Naive thymus-derived CD4-positive, alpha-beta T cell (primary cell): ENCODE measurements at regions of chr20 and their contacts with region 1.

Region 1: GRCh38 chr20:44885392-44886265 is at the start of gene YWHAB:
- DNase-seq: peak; percentile 89 to 98 (median 95)
- ATAC-seq: peak; percentile 98
- H3K4me3 ChIP-seq: peak within 1 kb of the TSS; percentile 87
- H3K4me3 Mint-ChIP-seq: peak within 1 kb of the TSS; percentile 83 to 98 (median 97)
- H3K27ac ChIP-seq: peak within 1 kb of the TSS; percentile 96
- H3K27ac Mint-ChIP-seq: peak within 1 kb of the TSS; percentile 89 to 99 (median 95)
- H3K4me1 ChIP-seq: peaks cover 39% of the 10 kb centered on the region in 2 donors
- H3K4me1 Mint-ChIP-seq: peaks cover 39 to 79% (median 68%) of the 10 kb centered on the region in 7 donors
- H3K27me3 ChIP-seq: no peaks in the 10 kb centered on the region
- H3K27me3 Mint-ChIP-seq: no peaks in the 10 kb centered on the region
- total RNA-seq, gene YWHAB: 135 to 262 (median 203) TPM

Region 2: DNA sequence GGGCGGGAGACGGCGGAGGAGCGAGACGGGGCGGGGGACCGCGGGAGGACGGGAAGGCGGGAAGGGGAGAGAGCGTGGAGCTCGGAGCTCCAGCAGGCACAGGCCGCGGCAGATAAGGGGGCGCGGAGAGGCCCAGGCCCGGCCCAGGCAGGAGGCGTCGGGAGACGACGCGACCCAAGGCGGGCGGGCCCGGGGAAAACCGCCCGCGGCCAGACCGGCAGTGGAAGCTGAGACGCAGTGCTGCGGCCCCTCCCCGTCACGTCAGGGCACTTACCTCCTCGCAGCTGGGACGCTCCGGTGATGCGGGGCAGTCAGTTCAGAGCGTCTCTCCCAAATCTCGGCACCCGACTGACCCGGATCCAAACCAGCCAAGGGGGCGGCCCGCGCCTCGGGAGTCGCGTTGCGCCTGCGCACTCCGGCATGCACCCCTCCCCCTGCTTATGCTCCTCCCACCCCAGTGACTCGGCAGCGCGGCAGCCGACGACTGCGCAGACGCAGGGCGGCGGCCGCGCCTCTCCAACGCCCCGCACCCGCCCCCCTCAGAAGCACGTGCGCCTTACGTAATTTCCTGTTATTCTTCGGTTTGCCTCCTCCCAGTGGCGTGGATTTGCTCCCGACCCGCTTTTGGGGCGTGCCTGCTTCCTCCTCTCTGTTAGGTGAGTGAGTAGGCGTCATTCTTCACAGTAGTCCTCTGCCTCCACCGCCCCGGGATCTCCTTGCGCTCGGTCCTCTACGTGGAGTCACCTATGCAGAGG is 675.0 kb before region 1 on chr20 and contains the start of gene OSER1:
- CTCF ChIA-PET with region 1: no interaction called
- POLR2A ChIA-PET with region 1: interaction called, 3 read pairs
- intact Hi-C with region 1: loop called (anchors 1 kb)
- DNase-seq: peak; percentile 98 to 99 (median 99)
- ATAC-seq: peak; percentile 91
- H3K4me3 ChIP-seq: peak within 1 kb of the TSS; percentile 96
- H3K4me3 Mint-ChIP-seq: peak within 1 kb of the TSS; percentile 90 to 100 (median 95)
- H3K27ac ChIP-seq: peak within 1 kb of the TSS; percentile 97
- H3K27ac Mint-ChIP-seq: peak within 1 kb of the TSS; percentile 97 to 99 (median 98)
- H3K4me1 ChIP-seq: peaks cover 23 to 29% of the 10 kb centered on the region in 2 donors
- H3K4me1 Mint-ChIP-seq: peaks cover 45 to 78% (median 72%) of the 10 kb centered on the region in 7 donors
- H3K27me3 ChIP-seq: no peaks in the 10 kb centered on the region
- H3K27me3 Mint-ChIP-seq: peaks cover 0 to 4% (median 0%) of the 10 kb centered on the region in 5 donors
- total RNA-seq, gene OSER1: 25.0 to 115 (median 43.0) TPM

Region 3: DNA sequence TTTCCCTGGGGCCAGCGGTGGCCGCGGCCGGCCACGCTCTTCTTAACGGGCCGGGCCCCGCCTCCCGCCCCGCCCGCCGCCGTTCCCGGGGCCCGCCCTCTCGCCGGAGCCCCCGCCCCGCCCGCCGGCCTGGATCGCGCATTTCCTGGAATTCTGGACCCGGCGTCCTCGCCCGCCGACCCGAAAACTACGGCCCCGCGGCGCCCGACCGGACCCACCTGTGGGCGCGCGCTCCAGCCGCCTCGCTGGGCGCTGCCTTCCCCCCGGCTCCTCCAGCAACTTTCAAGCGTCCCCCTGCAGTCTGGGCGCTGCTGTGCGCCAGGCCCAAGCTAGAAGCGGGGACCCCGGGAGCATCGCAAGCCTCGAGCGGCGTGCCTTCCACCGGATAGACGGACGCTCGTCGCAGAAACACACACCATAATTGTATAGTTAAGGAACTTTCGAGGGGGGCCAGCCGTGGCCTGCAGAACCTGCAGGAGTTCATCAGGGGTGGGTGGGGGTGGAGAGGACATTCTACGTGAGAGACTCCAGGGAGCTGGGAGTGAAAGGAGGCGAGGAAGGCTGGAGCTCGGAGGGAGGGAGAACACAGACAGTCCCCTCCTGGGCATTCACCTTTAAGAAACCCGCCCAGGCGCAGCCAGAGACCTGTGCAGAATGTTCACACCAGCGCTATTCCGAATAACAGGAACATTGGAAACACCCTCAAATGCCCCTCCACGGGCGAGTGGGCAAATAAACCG is 233.8 kb before region 1 on chr20 and contains the start of gene ADA:
- CTCF ChIA-PET with region 1: no interaction called
- POLR2A ChIA-PET with region 1: interaction called, 4 read pairs
- intact Hi-C with region 1: loop called in 1 of 2 experiments (anchors 1 kb)
- DNase-seq: peak; percentile 26 to 70 (median 48)
- ATAC-seq: peak; percentile 70
- H3K4me3 ChIP-seq: peak within 1 kb of the TSS; percentile 73
- H3K4me3 Mint-ChIP-seq: peak within 1 kb of the TSS; percentile 81 to 96 (median 94)
- H3K27ac ChIP-seq: peak within 1 kb of the TSS; percentile 73
- H3K27ac Mint-ChIP-seq: peak within 1 kb of the TSS; percentile 88 to 98 (median 95)
- H3K4me1 ChIP-seq: peaks cover 38 to 43% of the 10 kb centered on the region in 2 donors
- H3K4me1 Mint-ChIP-seq: peaks cover 40 to 57% (median 55%) of the 10 kb centered on the region in 7 donors
- H3K27me3 ChIP-seq: no peaks in the 10 kb centered on the region
- H3K27me3 Mint-ChIP-seq: no peaks in the 10 kb centered on the region
- total RNA-seq, gene ADA: 26.1 to 103 (median 28.2) TPM

Region 4: DNA sequence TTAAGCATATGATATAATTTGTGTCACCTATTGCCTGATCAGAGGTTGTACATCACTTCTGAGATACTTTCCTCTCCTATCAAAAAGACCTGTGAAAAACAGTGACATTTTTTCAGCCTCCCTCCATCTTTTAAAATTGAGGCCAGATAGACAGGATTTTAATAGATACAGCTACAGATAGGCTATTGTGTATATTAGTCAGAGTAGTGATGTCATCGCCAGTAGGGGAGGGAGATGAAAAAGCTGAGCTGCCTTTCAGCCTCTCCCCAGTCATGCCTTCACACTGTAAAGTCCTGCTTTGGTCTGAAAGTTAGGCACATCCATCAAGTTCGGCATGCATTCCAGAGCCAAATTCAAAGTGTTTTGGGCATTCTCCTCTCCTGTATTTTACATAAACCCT is 16.3 kb after region 1 on chr20:
- CTCF ChIA-PET with region 1: interaction called, 6 read pairs
- POLR2A ChIA-PET with region 1: interaction called, 10 read pairs
- intact Hi-C with region 1: no loop called
- DNase-seq: no peak
- ATAC-seq: no peak
- H3K4me3 ChIP-seq: no peak overlapping the region
- H3K4me3 Mint-ChIP-seq: no peak overlapping the region
- H3K27ac ChIP-seq: no peak overlapping the region
- H3K27ac Mint-ChIP-seq: peak overlapping the region in 1 of 9 donors; percentile 43
- H3K4me1 ChIP-seq: peaks cover 15 to 18% of the 10 kb centered on the region in 2 donors
- H3K4me1 Mint-ChIP-seq: peaks cover 20 to 48% (median 35%) of the 10 kb centered on the region in 7 donors
- H3K27me3 ChIP-seq: no peaks in the 10 kb centered on the region
- H3K27me3 Mint-ChIP-seq: no peaks in the 10 kb centered on the region

Region 5: DNA sequence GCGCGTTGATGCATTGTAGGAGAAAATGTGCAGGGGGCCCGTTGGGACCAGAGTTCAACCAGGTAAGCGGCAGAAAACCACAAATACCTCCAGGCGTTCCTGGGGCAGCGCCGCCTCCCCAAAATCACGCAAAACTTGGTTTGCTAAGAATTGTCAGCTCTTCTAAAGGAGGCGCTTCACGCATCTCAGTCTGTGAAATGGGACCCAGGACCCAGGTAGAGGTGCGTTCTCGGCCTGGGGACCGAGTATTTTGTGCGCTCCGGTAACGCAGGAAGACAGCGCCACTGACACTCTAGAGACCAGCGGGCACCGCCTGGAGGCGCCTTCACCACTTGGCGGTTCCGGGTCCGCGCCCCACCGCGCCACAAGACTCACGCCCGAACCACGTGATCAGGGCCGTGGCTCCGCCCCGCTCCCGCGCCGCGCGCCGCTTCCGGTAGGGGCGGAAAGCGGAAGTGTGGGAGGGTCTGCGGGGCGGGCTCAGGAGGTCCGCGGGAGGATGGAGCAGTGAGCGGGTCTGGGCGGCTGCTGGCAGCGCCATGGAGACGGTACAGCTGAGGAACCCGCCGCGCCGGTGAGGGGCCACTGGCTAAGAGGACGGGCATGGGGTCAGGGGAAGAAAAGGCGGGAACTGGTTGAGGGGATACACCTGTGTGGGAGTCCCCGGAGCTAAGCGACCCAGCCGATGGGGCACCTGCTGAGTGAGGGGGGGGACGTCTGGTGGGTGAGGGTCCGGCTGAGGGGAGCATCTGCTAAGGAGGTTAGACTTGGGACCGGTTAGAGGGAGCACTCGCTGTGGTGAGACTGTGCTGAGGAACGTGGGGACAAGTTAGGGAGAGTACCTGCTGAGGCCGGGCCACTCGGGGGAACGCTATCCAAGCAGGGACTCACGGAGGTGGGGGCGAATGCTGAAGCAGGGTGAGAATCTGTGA is 80.7 kb after region 1 on chr20 and contains the start of gene STK4:
- CTCF ChIA-PET with region 1: interaction called, 3 read pairs
- POLR2A ChIA-PET with region 1: interaction called, 7 read pairs
- intact Hi-C with region 1: loop called (anchors 1 to 2 kb)
- DNase-seq: peak; percentile 93 to 98 (median 96)
- ATAC-seq: peak; percentile 93
- H3K4me3 ChIP-seq: peak within 1 kb of the TSS; percentile 75
- H3K4me3 Mint-ChIP-seq: peak within 1 kb of the TSS; percentile 93 to 100 (median 95)
- H3K27ac ChIP-seq: peak within 1 kb of the TSS; percentile 91
- H3K27ac Mint-ChIP-seq: peak within 1 kb of the TSS; percentile 80 to 98 (median 90)
- H3K4me1 ChIP-seq: peaks cover 16 to 17% of the 10 kb centered on the region in 2 donors
- H3K4me1 Mint-ChIP-seq: peaks cover 32 to 60% (median 55%) of the 10 kb centered on the region in 7 donors
- H3K27me3 ChIP-seq: no peaks in the 10 kb centered on the region
- H3K27me3 Mint-ChIP-seq: no peaks in the 10 kb centered on the region
- total RNA-seq, gene STK4: 207 to 383 (median 267) TPM

Region 6: GRCh38 chr20:45128071-45128470 is 242.4 kb after region 1 on chr20:
- CTCF ChIA-PET with region 1: no interaction called
- POLR2A ChIA-PET with region 1: no interaction called
- intact Hi-C with region 1: no loop called
- DNase-seq: no peak
- ATAC-seq: no peak
- H3K4me3 ChIP-seq: no peak overlapping the region
- H3K4me3 Mint-ChIP-seq: no peak overlapping the region
- H3K27ac ChIP-seq: no peak overlapping the region
- H3K27ac Mint-ChIP-seq: no peak overlapping the region
- H3K4me1 ChIP-seq: no peaks in the 10 kb centered on the region
- H3K4me1 Mint-ChIP-seq: no peaks in the 10 kb centered on the region
- H3K27me3 ChIP-seq: peaks cover 0 to 4% of the 10 kb centered on the region in 2 donors
- H3K27me3 Mint-ChIP-seq: peaks cover 24 to 57% (median 44%) of the 10 kb centered on the region in 5 donors

Region 7: GRCh38 chr20:45362804-45363610 is 477.4 kb after region 1 on chr20 and contains the start of gene SYS1:
- CTCF ChIA-PET with region 1: no interaction called
- POLR2A ChIA-PET with region 1: no interaction called
- intact Hi-C with region 1: loop called in 1 of 2 experiments (anchors 1 kb)
- DNase-seq: peak; percentile 97 to 99 (median 99)
- ATAC-seq: peak; percentile 90
- H3K4me3 ChIP-seq: peak within 1 kb of the TSS; percentile 92
- H3K4me3 Mint-ChIP-seq: peak within 1 kb of the TSS; percentile 83 to 100 (median 97)
- H3K27ac ChIP-seq: peak within 1 kb of the TSS; percentile 99
- H3K27ac Mint-ChIP-seq: peak within 1 kb of the TSS; percentile 92 to 100 (median 99)
- H3K4me1 ChIP-seq: peaks cover 24 to 30% of the 10 kb centered on the region in 2 donors
- H3K4me1 Mint-ChIP-seq: peaks cover 24 to 56% (median 47%) of the 10 kb centered on the region in 7 donors
- H3K27me3 ChIP-seq: no peaks in the 10 kb centered on the region
- H3K27me3 Mint-ChIP-seq: peaks cover 0 to 2% (median 0%) of the 10 kb centered on the region in 5 donors
- total RNA-seq, gene SYS1: 23.9 to 111 (median 67.1) TPM

Region 8: GRCh38 chr20:45971675-45972499 is 1086.3 kb after region 1 on chr20 and contains the start of gene ZNF335:
- CTCF ChIA-PET with region 1: no interaction called
- POLR2A ChIA-PET with region 1: no interaction called
- intact Hi-C with region 1: loop called in 1 of 2 experiments (anchors 1 kb)
- DNase-seq: peak; percentile 89 to 99 (median 96)
- ATAC-seq: peak; percentile 89
- H3K4me3 ChIP-seq: peak within 1 kb of the TSS; percentile 74
- H3K4me3 Mint-ChIP-seq: peak within 1 kb of the TSS; percentile 80 to 100 (median 92)
- H3K27ac ChIP-seq: peak within 1 kb of the TSS; percentile 98
- H3K27ac Mint-ChIP-seq: peak within 1 kb of the TSS; percentile 99 to 100 (median 100)
- H3K4me1 ChIP-seq: peaks cover 24 to 26% of the 10 kb centered on the region in 2 donors
- H3K4me1 Mint-ChIP-seq: peaks cover 17 to 27% (median 24%) of the 10 kb centered on the region in 7 donors
- H3K27me3 ChIP-seq: no peaks in the 10 kb centered on the region
- H3K27me3 Mint-ChIP-seq: peaks cover 0 to 14% (median 0%) of the 10 kb centered on the region in 5 donors
- total RNA-seq, gene ZNF335: 39.9 to 95.2 (median 53.8) TPM